Heart left ventricle (tissue), 16 donors: ENCODE measurements at regions of chr17 and their contacts with region 1.

Region 1: GRCh38 chr17:62968445-62968923 is 2.4 kb downstream of the TANC2 start:
- DNase-seq: peak in 2 of 5 donors; percentile 35 to 55
- ATAC-seq: peak; percentile 53 to 74 (median 68)
- H3K4me3 ChIP-seq: peak overlapping the region in 1 of 12 donors; percentile 70
- H3K27ac ChIP-seq: no peak overlapping the region
- H3K4me1 ChIP-seq: peaks cover 0 to 31% (median 20%) of the 10 kb centered on the region in 12 donors
- H3K27me3 ChIP-seq: no peaks in the 10 kb centered on the region
- CTCF ChIP-seq: peak; percentile 59 to 95 (median 78)
- POLR2A ChIP-seq: no peak

Region 2: GRCh38 chr17:62671583-62672312 is 296.7 kb before region 1 on chr17:
- intact Hi-C with region 1: loop called in 1 of 10 experiments (anchors 10 kb)
- DNase-seq: peak in 1 of 5 donors; percentile 68
- ATAC-seq: peak in 2 of 4 donors; percentile 17 to 35
- H3K4me3 ChIP-seq: no peak overlapping the region
- H3K27ac ChIP-seq: no peak overlapping the region
- H3K4me1 ChIP-seq: peaks cover 0 to 8% (median 0%) of the 10 kb centered on the region in 12 donors
- H3K27me3 ChIP-seq: no peaks in the 10 kb centered on the region
- CTCF ChIP-seq: no peak
- POLR2A ChIP-seq: no peak

Region 3: GRCh38 chr17:62703775-62704378 is 264.6 kb before region 1 on chr17:
- intact Hi-C with region 1: loop called (anchors 1 to 5 kb)
- DNase-seq: peak; percentile 77 to 91 (median 79)
- ATAC-seq: peak; percentile 83 to 95 (median 88)
- H3K4me3 ChIP-seq: peak overlapping the region; percentile 57 to 91 (median 74)
- H3K27ac ChIP-seq: peak overlapping the region; percentile 70 to 93 (median 78)
- H3K4me1 ChIP-seq: peaks cover 0 to 36% (median 23%) of the 10 kb centered on the region in 12 donors
- H3K27me3 ChIP-seq: peaks cover 0 to 13% (median 0%) of the 10 kb centered on the region in 9 donors
- CTCF ChIP-seq: peak; percentile 69 to 93 (median 86)
- POLR2A ChIP-seq: no peak

Region 4: GRCh38 chr17:62819475-62820212 is 148.8 kb before region 1 on chr17:
- intact Hi-C with region 1: loop called in 1 of 10 experiments (anchors 10 kb)
- DNase-seq: peak; percentile 45 to 77 (median 58)
- ATAC-seq: peak; percentile 94 to 99 (median 96)
- H3K4me3 ChIP-seq: peak overlapping the region in 4 of 12 donors; percentile 1 to 23 (median 10)
- H3K27ac ChIP-seq: peak overlapping the region in 8 of 12 donors; percentile 18 to 67 (median 43)
- H3K4me1 ChIP-seq: peaks cover 0 to 14% (median 10%) of the 10 kb centered on the region in 12 donors
- H3K27me3 ChIP-seq: no peaks in the 10 kb centered on the region
- CTCF ChIP-seq: peak in 1 of 12 donors; percentile 8
- POLR2A ChIP-seq: no peak

Region 5: DNA sequence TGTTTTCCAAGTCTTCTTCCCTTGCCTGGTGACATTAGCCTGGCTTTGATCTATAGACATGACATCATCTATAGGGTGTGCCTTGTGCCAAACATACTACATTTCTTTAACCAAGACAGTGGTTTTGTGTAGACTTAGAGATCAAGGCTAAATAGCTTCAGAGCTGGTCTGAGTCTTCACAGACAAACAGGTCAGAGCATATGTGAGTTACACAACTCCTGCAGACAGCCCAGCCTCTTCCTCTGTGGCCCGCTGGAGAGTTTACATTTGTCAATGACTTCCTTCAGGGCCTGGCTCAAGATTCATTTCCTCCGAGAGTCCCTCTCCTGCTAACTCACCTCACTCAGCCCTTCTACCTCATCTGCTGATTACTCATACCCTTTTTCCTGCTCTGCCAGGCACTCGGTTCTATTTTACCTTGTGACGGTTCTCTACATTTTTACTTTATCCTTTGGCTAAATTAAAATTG is 75.6 kb before region 1 on chr17:
- intact Hi-C with region 1: loop called in 3 of 10 experiments (anchors 5 kb)
- DNase-seq: peak in 4 of 5 donors; percentile 31 to 54 (median 49)
- ATAC-seq: peak; percentile 55 to 95 (median 86)
- H3K4me3 ChIP-seq: no peak overlapping the region
- H3K27ac ChIP-seq: peak overlapping the region in 6 of 12 donors; percentile 18 to 51 (median 39)
- H3K4me1 ChIP-seq: peaks cover 0 to 34% (median 13%) of the 10 kb centered on the region in 12 donors
- H3K27me3 ChIP-seq: no peaks in the 10 kb centered on the region
- CTCF ChIP-seq: no peak
- POLR2A ChIP-seq: no peak

Region 6: DNA sequence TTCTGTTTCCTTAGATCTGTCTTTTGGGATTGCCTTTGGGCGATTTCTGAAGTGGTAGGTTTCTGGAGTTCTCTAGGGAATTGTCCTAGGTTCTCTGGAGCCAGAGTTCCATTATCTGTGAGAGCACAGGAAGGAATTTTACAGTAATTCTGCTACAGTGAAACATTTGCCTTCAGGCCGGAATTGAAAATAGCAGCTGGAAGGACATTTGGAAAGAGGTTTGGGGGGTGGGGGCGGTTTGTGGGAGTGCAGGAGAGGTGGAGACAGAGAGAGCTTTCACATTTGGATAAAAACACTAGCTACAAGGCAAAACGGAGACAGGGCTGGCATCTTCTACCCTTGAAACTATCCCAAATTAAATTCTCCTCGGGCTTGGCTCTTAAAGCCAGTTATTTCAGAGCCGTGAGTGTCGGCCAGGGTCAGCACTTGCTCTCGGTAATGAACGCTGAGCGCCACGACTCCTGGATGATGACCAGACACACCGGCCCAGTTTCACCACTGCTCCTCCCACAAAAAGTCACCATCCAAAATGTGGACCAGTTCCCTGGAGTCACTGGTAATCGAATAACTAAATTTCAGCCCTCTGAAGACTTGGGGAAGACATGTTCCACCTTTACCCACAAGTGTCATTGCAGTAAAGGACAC is 70.1 kb before region 1 on chr17:
- intact Hi-C with region 1: loop called in 3 of 10 experiments (anchors 5 kb)
- DNase-seq: peak in 2 of 5 donors; percentile 28 to 51
- ATAC-seq: peak; percentile 22 to 70 (median 51)
- H3K4me3 ChIP-seq: peak overlapping the region in 2 of 12 donors; percentile 18 to 22
- H3K27ac ChIP-seq: peak overlapping the region in 5 of 12 donors; percentile 7 to 49 (median 48)
- H3K4me1 ChIP-seq: peaks cover 0 to 25% (median 7%) of the 10 kb centered on the region in 12 donors
- H3K27me3 ChIP-seq: no peaks in the 10 kb centered on the region
- CTCF ChIP-seq: no peak
- POLR2A ChIP-seq: no peak

Region 7: DNA sequence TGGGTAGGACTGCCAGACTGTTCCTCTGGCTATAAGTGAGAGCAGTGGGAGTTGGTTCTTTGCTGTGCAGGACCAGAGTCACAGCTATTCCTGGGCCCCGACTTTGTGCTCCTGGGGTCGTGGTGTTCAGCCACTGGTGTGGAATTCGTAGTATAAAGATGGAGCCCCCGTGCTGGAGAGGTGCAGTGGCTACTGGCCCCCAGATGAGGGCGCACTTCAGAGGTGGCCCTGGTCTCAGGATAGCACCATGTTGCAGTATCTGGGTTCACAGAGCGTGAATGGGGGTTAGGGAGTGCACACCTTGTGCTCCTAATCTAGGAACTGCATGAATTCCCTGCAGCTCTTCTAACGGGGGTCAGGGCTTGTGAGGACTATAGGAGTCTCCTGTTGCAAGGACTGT is 18.7 kb after region 1 on chr17:
- intact Hi-C with region 1: no loop called
- DNase-seq: no peak
- ATAC-seq: no peak
- H3K4me3 ChIP-seq: no peak overlapping the region
- H3K27ac ChIP-seq: no peak overlapping the region
- H3K4me1 ChIP-seq: peaks cover 0 to 5% (median 0%) of the 10 kb centered on the region in 12 donors
- H3K27me3 ChIP-seq: no peaks in the 10 kb centered on the region
- CTCF ChIP-seq: peak in 1 of 12 donors; percentile 9
- POLR2A ChIP-seq: no peak